CD4-positive, alpha-beta T cell (primary cell): ENCODE measurements at regions of chr11 and their contacts with region 1.

Region 1: DNA sequence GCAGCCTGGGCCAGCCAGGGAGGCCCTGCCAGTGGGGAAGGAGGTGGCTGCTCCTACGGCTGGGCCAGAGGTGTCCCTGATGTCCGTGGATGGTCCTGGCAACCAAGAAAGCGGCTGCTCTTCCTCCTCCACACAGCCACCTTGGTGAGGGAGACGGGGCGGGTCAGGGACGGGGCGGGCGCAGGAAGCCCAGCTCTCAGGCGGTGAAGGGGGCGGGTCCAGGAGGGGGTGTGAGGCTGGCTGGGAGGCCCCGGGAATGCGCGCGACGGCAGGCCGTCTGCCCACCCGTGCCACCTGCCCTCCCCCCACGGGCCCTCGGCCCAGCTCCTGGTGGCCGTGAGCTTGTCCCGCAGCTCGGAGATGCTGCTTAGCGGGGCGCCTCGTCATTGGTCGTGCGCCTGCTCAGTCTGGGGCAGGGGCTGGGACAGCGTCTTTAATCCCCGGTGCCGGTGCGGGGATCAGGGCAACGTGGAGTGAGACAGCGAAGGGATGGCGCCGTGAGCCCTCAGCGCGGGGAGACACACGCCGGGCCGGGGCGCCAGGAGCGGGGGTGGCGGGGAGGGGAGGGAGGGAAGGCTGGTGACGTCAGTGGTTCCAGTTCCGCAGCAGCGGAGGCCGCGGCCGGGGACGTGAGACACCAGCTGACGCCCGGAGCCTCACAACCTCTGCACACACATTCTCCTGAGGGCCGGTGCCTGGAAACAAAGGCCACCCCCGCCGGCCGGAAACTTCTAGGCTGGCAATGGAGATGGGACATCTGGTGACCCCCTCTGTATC is 6.7 kb upstream of the BRSK2 start:
- DNase-seq: peak; percentile 54 to 92 (median 71)
- ATAC-seq: peak; percentile 77
- H3K4me3 ChIP-seq: peak overlapping the region; percentile 63
- H3K4me3 Mint-ChIP-seq: peak overlapping the region; percentile 87
- H3K27ac ChIP-seq: peak overlapping the region; percentile 74 to 85
- H3K27ac Mint-ChIP-seq: peak overlapping the region; percentile 78
- H3K4me1 ChIP-seq: peaks cover 20% of the 10 kb centered on the region
- H3K4me1 Mint-ChIP-seq: peaks cover 6% of the 10 kb centered on the region
- H3K27me3 ChIP-seq: no peaks in the 10 kb centered on the region
- H3K27me3 Mint-ChIP-seq: no peaks in the 10 kb centered on the region
- CTCF ChIP-seq: no peak

Region 2: GRCh38 chr11:1335811-1336761 is 46.9 kb before region 1 on chr11:
- CTCF ChIA-PET with region 1: no interaction called
- POLR2A ChIA-PET with region 1: interaction called, 6 read pairs
- intact Hi-C with region 1: loop called (anchors 2 to 5 kb)
- DNase-seq: peak in 13 of 14 experiments; percentile 32 to 85 (median 59)
- ATAC-seq: peak; percentile 56
- H3K4me3 ChIP-seq: peak overlapping the region; percentile 59
- H3K4me3 Mint-ChIP-seq: peak overlapping the region; percentile 93
- H3K27ac ChIP-seq: no peak overlapping the region
- H3K27ac Mint-ChIP-seq: peak overlapping the region; percentile 85
- H3K4me1 ChIP-seq: peaks cover 14% of the 10 kb centered on the region
- H3K4me1 Mint-ChIP-seq: peaks cover 22% of the 10 kb centered on the region
- H3K27me3 ChIP-seq: no peaks in the 10 kb centered on the region
- H3K27me3 Mint-ChIP-seq: no peaks in the 10 kb centered on the region
- CTCF ChIP-seq: no peak

Region 3: GRCh38 chr11:1341928-1342524 is 41.0 kb before region 1 on chr11:
- CTCF ChIA-PET with region 1: interaction called, 3 read pairs
- POLR2A ChIA-PET with region 1: interaction called, 3 read pairs
- intact Hi-C with region 1: loop called (anchors 2 to 5 kb)
- DNase-seq: peak in 1 of 14 experiments; percentile 20
- ATAC-seq: no peak
- H3K4me3 ChIP-seq: no peak overlapping the region
- H3K4me3 Mint-ChIP-seq: no peak overlapping the region
- H3K27ac ChIP-seq: peak overlapping the region in 1 of 2 donors; percentile 34
- H3K27ac Mint-ChIP-seq: no peak overlapping the region
- H3K4me1 ChIP-seq: no peaks in the 10 kb centered on the region
- H3K4me1 Mint-ChIP-seq: peaks cover 9% of the 10 kb centered on the region
- H3K27me3 ChIP-seq: no peaks in the 10 kb centered on the region
- H3K27me3 Mint-ChIP-seq: no peaks in the 10 kb centered on the region
- CTCF ChIP-seq: no peak

Region 4: DNA sequence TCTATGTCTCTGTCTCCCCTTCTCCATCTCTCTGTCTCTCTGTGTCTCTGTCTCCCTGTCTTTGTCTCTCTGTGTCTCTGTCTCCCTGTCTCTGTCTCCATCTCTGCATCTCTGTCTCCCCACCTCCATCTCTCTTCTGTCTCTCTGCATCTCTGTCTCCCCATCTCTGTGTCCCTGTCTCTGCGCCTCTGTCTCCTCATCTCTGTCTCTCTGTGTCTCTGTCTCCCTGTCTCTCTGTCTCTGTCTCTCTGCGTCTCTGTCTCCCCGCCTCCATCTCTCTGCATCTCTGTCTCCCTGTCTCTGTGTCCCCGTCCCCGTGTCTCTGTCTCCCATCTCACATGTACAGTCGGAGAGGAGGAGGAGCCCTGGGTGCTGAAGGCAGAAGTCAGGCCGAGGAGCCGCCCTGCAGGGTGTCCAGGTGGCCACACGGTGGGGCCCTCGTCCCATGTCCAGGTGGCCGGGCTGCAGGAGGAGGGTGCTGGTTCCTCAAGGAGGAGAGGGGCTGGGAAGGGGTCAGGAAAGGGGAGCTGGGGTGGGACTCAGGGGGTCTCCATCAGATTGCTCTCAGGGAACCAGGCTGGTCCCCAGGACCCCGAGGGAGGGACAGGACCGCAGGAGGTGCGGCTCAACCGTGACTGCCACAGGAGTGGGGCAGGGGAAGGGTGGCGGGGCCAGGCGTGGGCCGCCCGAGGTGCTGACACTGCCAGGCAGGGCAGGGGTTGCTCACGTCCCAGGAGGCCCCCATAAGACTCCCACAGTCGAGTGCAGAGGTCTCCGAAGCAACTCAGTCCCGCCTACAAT is 814.2 kb after region 1 on chr11:
- CTCF ChIA-PET with region 1: no interaction called
- POLR2A ChIA-PET with region 1: no interaction called
- intact Hi-C with region 1: no loop called
- DNase-seq: peak; percentile 53 to 84 (median 62)
- ATAC-seq: peak; percentile 90
- H3K4me3 ChIP-seq: no peak overlapping the region
- H3K4me3 Mint-ChIP-seq: no peak overlapping the region
- H3K27ac ChIP-seq: no peak overlapping the region
- H3K27ac Mint-ChIP-seq: no peak overlapping the region
- H3K4me1 ChIP-seq: peaks cover 14% of the 10 kb centered on the region
- H3K4me1 Mint-ChIP-seq: peaks cover 13% of the 10 kb centered on the region
- H3K27me3 ChIP-seq: no peaks in the 10 kb centered on the region
- H3K27me3 Mint-ChIP-seq: no peaks in the 10 kb centered on the region
- CTCF ChIP-seq: peak; percentile 63